CD8-positive, alpha-beta T cell (primary cell): ENCODE measurements at regions of chr7 and their contacts with region 1.

Region 1: GRCh38 chr7:66654123-66654732 is 25.5 kb downstream of the KCTD7 start:
- DNase-seq: peak; percentile 94 to 99 (median 98)
- ATAC-seq: peak; percentile 91
- H3K4me3 ChIP-seq: peak overlapping the region; percentile 64 to 86
- H3K4me3 Mint-ChIP-seq: peak overlapping the region; percentile 99
- H3K27ac ChIP-seq: peak overlapping the region; percentile 92 to 98
- H3K27ac Mint-ChIP-seq: peak overlapping the region; percentile 99
- H3K4me1 ChIP-seq: peaks cover 7% of the 10 kb centered on the region
- H3K4me1 Mint-ChIP-seq: peaks cover 24% of the 10 kb centered on the region
- H3K27me3 ChIP-seq: no peaks in the 10 kb centered on the region
- H3K27me3 Mint-ChIP-seq: no peaks in the 10 kb centered on the region
- CTCF ChIP-seq: no peak

Region 2: GRCh38 chr7:66409479-66409878 is 244.7 kb before region 1 on chr7:
- CTCF ChIA-PET with region 1: no interaction called
- POLR2A ChIA-PET with region 1: no interaction called
- intact Hi-C with region 1: no loop called
- DNase-seq: no peak
- ATAC-seq: no peak
- H3K4me3 ChIP-seq: no peak overlapping the region
- H3K4me3 Mint-ChIP-seq: no peak overlapping the region
- H3K27ac ChIP-seq: no peak overlapping the region
- H3K27ac Mint-ChIP-seq: peak overlapping the region; percentile 47
- H3K4me1 ChIP-seq: peaks cover 14% of the 10 kb centered on the region
- H3K4me1 Mint-ChIP-seq: peaks cover 11% of the 10 kb centered on the region
- H3K27me3 ChIP-seq: no peaks in the 10 kb centered on the region
- H3K27me3 Mint-ChIP-seq: no peaks in the 10 kb centered on the region
- CTCF ChIP-seq: no peak

Region 3: GRCh38 chr7:66628361-66629140 is 25.7 kb before region 1 on chr7 and contains the start of gene KCTD7:
- CTCF ChIA-PET with region 1: interaction called, 5 read pairs
- POLR2A ChIA-PET with region 1: interaction called, 19 read pairs
- intact Hi-C with region 1: loop called (anchors 1 kb)
- DNase-seq: peak; percentile 91 to 98 (median 94)
- ATAC-seq: peak; percentile 89
- H3K4me3 ChIP-seq: peak within 1 kb of the TSS; percentile 91 to 99
- H3K4me3 Mint-ChIP-seq: peak within 1 kb of the TSS; percentile 89
- H3K27ac ChIP-seq: peak within 1 kb of the TSS; percentile 89 to 97
- H3K27ac Mint-ChIP-seq: peak within 1 kb of the TSS; percentile 91
- H3K4me1 ChIP-seq: peaks cover 42% of the 10 kb centered on the region
- H3K4me1 Mint-ChIP-seq: peaks cover 51% of the 10 kb centered on the region
- H3K27me3 ChIP-seq: no peaks in the 10 kb centered on the region
- H3K27me3 Mint-ChIP-seq: no peaks in the 10 kb centered on the region
- CTCF ChIP-seq: no peak
- total RNA-seq, gene KCTD7: 12.9 to 13.2 TPM

Region 4: GRCh38 chr7:66671034-66671433 is 16.8 kb after region 1 on chr7:
- CTCF ChIA-PET with region 1: no interaction called
- POLR2A ChIA-PET with region 1: no interaction called
- intact Hi-C with region 1: no loop called
- DNase-seq: no peak
- ATAC-seq: no peak
- H3K4me3 ChIP-seq: no peak overlapping the region
- H3K4me3 Mint-ChIP-seq: no peak overlapping the region
- H3K27ac ChIP-seq: no peak overlapping the region
- H3K27ac Mint-ChIP-seq: no peak overlapping the region
- H3K4me1 ChIP-seq: no peaks in the 10 kb centered on the region
- H3K4me1 Mint-ChIP-seq: no peaks in the 10 kb centered on the region
- H3K27me3 ChIP-seq: no peaks in the 10 kb centered on the region
- H3K27me3 Mint-ChIP-seq: no peaks in the 10 kb centered on the region
- CTCF ChIP-seq: no peak